ENCODE measurements at regions of chr15 and their contacts with region 1.

Region 1: GRCh38 chr15:74545880-74546656 is 5.0 kb downstream of the ARID3B start:
- DNase-seq: peak; percentile 76
- H3K4me3 Mint-ChIP-seq: peak overlapping the region; percentile 75
- H3K27ac Mint-ChIP-seq: peak overlapping the region; percentile 83
- H3K4me1 Mint-ChIP-seq: peaks cover 80% of the 10 kb centered on the region
- H3K27me3 Mint-ChIP-seq: no peaks in the 10 kb centered on the region

Region 2: DNA sequence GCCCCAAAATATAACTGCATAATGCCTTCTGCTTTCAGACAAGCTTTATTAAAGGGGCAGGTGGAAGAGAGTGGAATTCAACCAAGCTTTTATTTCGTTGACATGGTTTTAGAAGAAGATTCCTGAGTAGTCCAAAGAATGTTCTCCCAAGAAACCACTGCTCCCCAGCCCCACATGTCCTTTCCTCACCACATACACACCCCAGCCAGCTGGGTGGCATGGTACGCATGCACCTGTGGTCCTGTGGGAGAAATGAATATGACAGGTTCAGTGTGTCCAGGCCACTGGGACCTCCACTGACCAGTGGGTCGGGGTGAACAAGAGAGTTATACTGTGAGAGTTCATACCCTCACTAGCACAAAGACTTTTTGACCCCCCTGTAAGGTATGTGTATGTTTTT is 25.1 kb after region 1 on chr15:
- intact Hi-C with region 1: loop called (anchors 2 kb)
- DNase-seq: no peak
- H3K4me3 Mint-ChIP-seq: no peak overlapping the region
- H3K27ac Mint-ChIP-seq: no peak overlapping the region
- H3K4me1 Mint-ChIP-seq: peaks cover 28% of the 10 kb centered on the region
- H3K27me3 Mint-ChIP-seq: no peaks in the 10 kb centered on the region

Region 3: DNA sequence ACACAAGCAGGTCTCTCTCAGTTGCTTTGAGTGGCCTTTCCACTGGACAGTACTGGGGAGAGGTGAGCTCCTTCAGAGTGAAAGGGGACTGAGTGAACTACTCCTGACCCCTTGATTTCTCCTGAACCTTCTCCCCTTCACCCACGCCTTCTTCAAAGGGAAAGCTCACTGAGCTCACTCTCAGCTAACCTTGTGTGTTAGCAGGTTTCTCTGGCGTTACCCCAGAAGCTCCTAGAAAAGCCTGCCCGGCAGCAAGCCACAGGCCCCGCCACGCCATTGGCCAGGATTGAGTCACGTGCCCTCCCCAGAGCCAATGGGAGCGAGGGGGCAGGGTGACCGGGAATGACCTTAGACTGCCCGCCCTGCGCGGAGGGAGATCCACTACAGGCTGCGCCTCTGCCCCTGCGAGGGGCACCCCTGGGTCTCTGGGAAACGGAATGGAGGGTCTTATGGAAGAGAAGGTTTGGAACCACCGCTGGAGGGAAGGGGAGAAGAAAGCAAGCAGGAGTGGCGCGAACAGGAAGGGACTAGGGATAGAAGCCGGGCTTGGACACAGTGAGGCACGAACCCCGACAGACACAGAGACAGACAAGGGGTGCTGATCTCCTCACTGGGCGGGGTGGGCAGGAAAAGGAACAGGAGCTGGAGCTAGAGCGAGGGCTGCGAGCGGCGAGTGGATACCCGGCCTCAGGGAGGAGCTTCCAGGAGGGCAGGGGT is 52.2 kb after region 1 on chr15:
- intact Hi-C with region 1: loop called (anchors 1 kb)
- DNase-seq: peak; percentile 87
- H3K4me3 Mint-ChIP-seq: peak overlapping the region; percentile 100
- H3K27ac Mint-ChIP-seq: peak overlapping the region; percentile 100
- H3K4me1 Mint-ChIP-seq: peaks cover 19% of the 10 kb centered on the region
- H3K27me3 Mint-ChIP-seq: no peaks in the 10 kb centered on the region

Region 4: GRCh38 chr15:74615508-74616365 is 69.7 kb after region 1 on chr15 and contains the start of gene CLK3:
- intact Hi-C with region 1: loop called (anchors 1 kb)
- DNase-seq: peak; percentile 94
- H3K4me3 Mint-ChIP-seq: peak within 1 kb of the TSS; percentile 93
- H3K27ac Mint-ChIP-seq: peak within 1 kb of the TSS; percentile 95
- H3K4me1 Mint-ChIP-seq: peaks cover 33% of the 10 kb centered on the region
- H3K27me3 Mint-ChIP-seq: peaks cover 5% of the 10 kb centered on the region
- total RNA-seq, gene CLK3: 103 and 107 TPM in 2 replicates